ENCODE measurements at regions of chr1 and their contacts with region 1.

Region 1: DNA sequence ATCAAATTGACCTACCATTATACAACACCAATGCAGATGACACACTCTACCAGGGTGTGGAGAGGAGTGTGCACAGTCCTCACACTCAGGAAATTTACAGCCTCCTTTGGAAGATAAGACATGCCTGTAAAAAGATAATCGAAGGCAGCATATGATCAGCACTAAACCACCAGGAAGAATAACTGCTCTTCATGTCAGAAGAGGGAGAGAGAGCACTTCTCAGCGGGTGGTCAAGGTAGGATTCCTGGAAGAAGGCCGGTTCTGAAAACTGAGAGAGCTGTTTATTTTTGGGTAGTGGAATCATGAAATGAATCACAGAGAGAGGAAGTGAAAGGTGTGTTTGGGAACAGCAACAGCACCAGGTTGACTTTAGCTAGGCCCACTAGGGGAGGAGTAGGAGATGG is 14.0 kb upstream of the ZNF697 start:
- DNase-seq: no peak
- H3K4me3 ChIP-seq: no peak overlapping the region
- H3K4me3 Mint-ChIP-seq: no peak overlapping the region
- H3K27ac Mint-ChIP-seq: no peak overlapping the region
- H3K4me1 ChIP-seq: peaks cover 22% of the 10 kb centered on the region
- H3K4me1 Mint-ChIP-seq: peaks cover 32% of the 10 kb centered on the region
- H3K27me3 ChIP-seq: no peaks in the 10 kb centered on the region
- H3K27me3 Mint-ChIP-seq: no peaks in the 10 kb centered on the region
- CTCF ChIP-seq: no peak

Region 2: DNA sequence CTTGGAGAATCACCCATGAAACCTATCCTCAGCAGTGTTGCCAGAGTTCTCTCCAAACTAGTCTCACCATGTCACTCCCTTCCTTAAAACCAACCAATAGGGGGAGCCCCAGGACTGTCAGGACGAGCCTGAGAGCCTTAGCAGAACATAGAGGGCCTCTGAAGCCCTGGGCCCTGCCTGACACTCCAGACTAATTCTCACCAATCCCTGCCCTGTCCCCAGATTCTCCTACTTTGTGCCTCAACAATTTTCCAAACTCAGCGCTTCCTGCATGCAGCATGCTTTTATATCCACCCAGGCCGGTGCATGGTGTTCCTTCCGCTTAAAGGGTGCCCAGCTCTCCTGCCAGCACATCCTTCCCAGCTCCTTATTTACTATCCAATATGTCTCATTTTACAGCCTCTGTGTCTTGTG is 112.3 kb before region 1 on chr1:
- CTCF ChIA-PET with region 1: no interaction called
- POLR2A ChIA-PET with region 1: no interaction called
- intact Hi-C with region 1: loop called (anchors 5 kb)
- DNase-seq: peak; percentile 66 to 75
- H3K4me3 ChIP-seq: no peak overlapping the region
- H3K4me3 Mint-ChIP-seq: no peak overlapping the region
- H3K27ac Mint-ChIP-seq: no peak overlapping the region
- H3K4me1 ChIP-seq: no peaks in the 10 kb centered on the region
- H3K4me1 Mint-ChIP-seq: peaks cover 11% of the 10 kb centered on the region
- H3K27me3 ChIP-seq: no peaks in the 10 kb centered on the region
- H3K27me3 Mint-ChIP-seq: no peaks in the 10 kb centered on the region
- CTCF ChIP-seq: peak in 1 of 2 experiments; percentile 58

Region 3: DNA sequence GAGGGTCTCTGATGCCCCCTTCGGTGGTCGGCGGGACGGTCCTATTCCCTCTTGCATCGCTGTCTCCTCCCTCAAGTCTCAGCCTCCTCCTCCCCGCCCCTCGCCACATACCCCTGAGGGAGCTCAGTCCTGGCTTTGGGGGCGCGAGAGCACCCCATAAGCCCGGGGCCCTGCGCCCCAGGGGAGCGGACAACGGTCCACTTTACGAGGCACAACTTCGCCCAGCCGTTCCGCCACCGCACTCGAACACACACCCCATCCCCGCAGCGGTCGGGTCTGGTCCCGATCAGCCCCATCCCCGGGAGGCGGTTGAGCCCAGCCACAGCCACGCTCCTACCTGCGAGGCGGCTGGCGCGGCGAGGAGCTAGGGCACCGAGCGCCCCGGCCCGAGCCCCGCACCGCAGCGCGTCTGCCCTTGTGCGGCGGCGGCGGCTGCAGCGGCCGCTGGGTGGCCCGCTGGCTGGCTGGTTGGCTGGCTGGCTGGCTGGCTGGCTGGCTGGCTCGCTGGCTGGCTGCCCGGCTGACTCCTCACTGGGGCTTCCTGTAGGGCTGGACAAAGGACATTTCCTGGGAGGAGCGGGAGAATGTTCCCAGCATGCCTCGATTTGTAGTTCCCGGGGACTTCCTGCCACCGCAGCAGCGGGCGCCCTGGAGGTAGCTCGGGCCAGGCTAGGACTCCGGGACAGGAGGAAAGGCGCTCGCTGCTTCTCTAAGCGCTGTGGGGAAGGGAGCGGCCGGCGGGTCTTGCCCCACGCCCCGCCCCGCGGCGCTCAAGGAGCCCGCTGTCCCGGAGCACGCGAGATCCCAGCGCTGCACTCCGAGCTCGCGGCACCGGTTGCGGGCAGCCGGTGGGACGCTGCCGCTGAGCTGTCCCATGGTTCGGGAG is 14.1 kb before region 1 on chr1 and contains the start of gene ZNF697:
- CTCF ChIA-PET with region 1: interaction called, 13 read pairs
- POLR2A ChIA-PET with region 1: no interaction called
- intact Hi-C with region 1: loop called (anchors 1 kb)
- DNase-seq: peak; percentile 89 to 93
- H3K4me3 ChIP-seq: peak within 1 kb of the TSS; percentile 89
- H3K4me3 Mint-ChIP-seq: peak within 1 kb of the TSS; percentile 97
- H3K27ac Mint-ChIP-seq: peak within 1 kb of the TSS; percentile 40
- H3K4me1 ChIP-seq: no peaks in the 10 kb centered on the region
- H3K4me1 Mint-ChIP-seq: peaks cover 9% of the 10 kb centered on the region
- H3K27me3 ChIP-seq: no peaks in the 10 kb centered on the region
- H3K27me3 Mint-ChIP-seq: peaks cover under 1% of the 10 kb centered on the region
- CTCF ChIP-seq: peak; percentile 14 to 21
- total RNA-seq, gene ZNF697: 2.9 and 3.1 TPM in 2 replicates